HEK293 (cell line): ENCODE measurements at regions of chrX and their contacts with region 1.

Region 1: GRCh38 chrX:148541544-148541983 is 41.1 kb downstream of the AFF2 start:
- H3K4me3 ChIP-seq: no peak overlapping the region
- H3K27ac ChIP-seq: no peak overlapping the region
- H3K4me1 ChIP-seq: no peaks in the 10 kb centered on the region
- CTCF ChIP-seq: no peak

Region 2: GRCh38 chrX:148530464-148531077 is 11.0 kb before region 1 on chrX:
- CTCF ChIA-PET with region 1: interaction called, 40 read pairs
- POLR2A ChIA-PET with region 1: no interaction called
- H3K4me3 ChIP-seq: no peak overlapping the region
- H3K27ac ChIP-seq: no peak overlapping the region
- H3K4me1 ChIP-seq: no peaks in the 10 kb centered on the region
- CTCF ChIP-seq: no peak